Activated CD8-positive, alpha-beta memory T cell treated with anti-CD3 and anti-CD28 coated beads, Interleukin-2, amount 10 ng/mL, durations not matched to agents 7 days and 5 days (primary cell): ENCODE measurements at regions of chr11 and their contacts with region 1.

Region 1: GRCh38 chr11:36265793-36266628 is 23.2 kb downstream of the COMMD9 start:
- DNase-seq: peak; percentile 56
- ATAC-seq: peak; percentile 74
- H3K4me3 Mint-ChIP-seq: no peak overlapping the region
- H3K27ac Mint-ChIP-seq: no peak overlapping the region
- H3K4me1 Mint-ChIP-seq: no peaks in the 10 kb centered on the region
- H3K27me3 Mint-ChIP-seq: peaks cover 12% of the 10 kb centered on the region

Region 2: GRCh38 chr11:35617687-35618496 is 648.1 kb before region 1 on chr11 and contains the start of gene FJX1:
- CTCF ChIA-PET with region 1: interaction called, 19 read pairs
- DNase-seq: no peak
- ATAC-seq: no peak
- H3K4me3 Mint-ChIP-seq: no peak within 1 kb of the TSS
- H3K27ac Mint-ChIP-seq: no peak within 1 kb of the TSS
- H3K4me1 Mint-ChIP-seq: peaks cover 4% of the 10 kb centered on the region
- H3K27me3 Mint-ChIP-seq: peaks cover 66% of the 10 kb centered on the region
- total RNA-seq, gene FJX1: 0.33 TPM in 1 of 2 experiments, not detected in the other

Region 3: DNA sequence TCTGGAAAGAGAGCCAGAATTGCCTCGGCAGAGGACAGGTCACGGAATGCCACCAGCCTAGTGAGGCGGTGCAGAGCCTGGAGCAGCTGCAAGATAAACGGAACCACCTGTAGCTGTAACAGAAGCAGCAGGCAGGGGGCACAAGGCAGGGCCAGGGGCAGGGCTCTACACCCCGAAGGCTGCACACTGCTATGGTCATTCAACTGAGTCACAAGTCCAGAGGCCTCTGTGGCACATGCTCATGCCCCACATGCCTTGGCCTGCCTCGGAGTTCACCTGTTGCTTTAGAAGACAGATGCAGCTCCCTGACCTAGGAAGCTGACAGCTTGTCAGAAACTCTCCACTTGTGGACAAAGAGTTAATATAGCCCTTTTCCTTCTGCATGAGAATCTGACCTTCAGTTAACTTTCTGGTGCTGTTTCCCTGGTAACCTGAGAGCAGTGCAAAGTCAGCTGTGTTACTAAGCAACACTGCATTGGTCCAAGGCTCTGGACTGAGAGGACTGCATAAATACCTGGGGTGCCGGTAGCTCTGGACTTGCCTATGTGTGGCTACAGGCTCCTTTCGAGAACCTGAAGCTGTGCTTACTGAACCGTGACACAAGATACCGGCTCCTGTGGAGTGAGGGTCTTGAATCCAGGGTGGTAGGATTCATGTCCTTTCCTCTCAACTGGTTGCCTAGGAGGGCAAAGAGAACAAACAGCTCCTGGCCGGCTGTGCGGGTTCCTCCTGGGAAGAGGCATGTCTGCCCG is 12.7 kb after region 1 on chr11:
- CTCF ChIA-PET with region 1: interaction called, 12 read pairs
- DNase-seq: no peak
- ATAC-seq: no peak
- H3K4me3 Mint-ChIP-seq: no peak overlapping the region
- H3K27ac Mint-ChIP-seq: no peak overlapping the region
- H3K4me1 Mint-ChIP-seq: no peaks in the 10 kb centered on the region
- H3K27me3 Mint-ChIP-seq: no peaks in the 10 kb centered on the region